Calu3 (cell line): ENCODE measurements at regions of chr2 and their contacts with region 1.

Region 1: DNA sequence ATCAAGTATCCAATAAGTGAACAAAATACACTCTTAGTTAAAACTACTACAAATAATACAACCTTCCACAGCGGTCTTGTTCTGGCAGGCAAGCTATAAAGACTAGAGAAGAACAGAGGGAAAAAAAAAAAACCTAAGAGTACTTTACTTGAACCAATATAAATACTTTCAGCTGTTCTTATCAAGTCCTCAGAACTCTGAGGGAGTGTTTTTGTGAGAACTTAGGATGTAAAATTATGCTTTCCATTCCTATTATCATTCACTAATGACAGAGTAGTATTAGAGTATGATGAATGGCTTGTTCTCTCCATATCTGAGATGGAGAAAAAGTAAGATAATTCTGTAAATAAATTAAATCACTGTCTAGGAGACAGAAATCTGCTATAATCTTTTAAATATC is 68.3 kb downstream of the ATL2 start:
- DNase-seq: no peak
- H3K4me3 Mint-ChIP-seq: no peak overlapping the region
- H3K27ac Mint-ChIP-seq: no peak overlapping the region
- H3K4me1 Mint-ChIP-seq: peaks cover 4% of the 10 kb centered on the region
- H3K27me3 Mint-ChIP-seq: no peaks in the 10 kb centered on the region
- CTCF ChIP-seq: no peak

Region 2: GRCh38 chr2:37610638-37611289 is 698.1 kb before region 1 on chr2:
- CTCF ChIA-PET with region 1: no interaction called
- intact Hi-C with region 1: no loop called
- DNase-seq: no peak
- H3K4me3 Mint-ChIP-seq: no peak overlapping the region
- H3K27ac Mint-ChIP-seq: no peak overlapping the region
- H3K4me1 Mint-ChIP-seq: no peaks in the 10 kb centered on the region
- H3K27me3 Mint-ChIP-seq: no peaks in the 10 kb centered on the region
- CTCF ChIP-seq: no peak

Region 3: DNA sequence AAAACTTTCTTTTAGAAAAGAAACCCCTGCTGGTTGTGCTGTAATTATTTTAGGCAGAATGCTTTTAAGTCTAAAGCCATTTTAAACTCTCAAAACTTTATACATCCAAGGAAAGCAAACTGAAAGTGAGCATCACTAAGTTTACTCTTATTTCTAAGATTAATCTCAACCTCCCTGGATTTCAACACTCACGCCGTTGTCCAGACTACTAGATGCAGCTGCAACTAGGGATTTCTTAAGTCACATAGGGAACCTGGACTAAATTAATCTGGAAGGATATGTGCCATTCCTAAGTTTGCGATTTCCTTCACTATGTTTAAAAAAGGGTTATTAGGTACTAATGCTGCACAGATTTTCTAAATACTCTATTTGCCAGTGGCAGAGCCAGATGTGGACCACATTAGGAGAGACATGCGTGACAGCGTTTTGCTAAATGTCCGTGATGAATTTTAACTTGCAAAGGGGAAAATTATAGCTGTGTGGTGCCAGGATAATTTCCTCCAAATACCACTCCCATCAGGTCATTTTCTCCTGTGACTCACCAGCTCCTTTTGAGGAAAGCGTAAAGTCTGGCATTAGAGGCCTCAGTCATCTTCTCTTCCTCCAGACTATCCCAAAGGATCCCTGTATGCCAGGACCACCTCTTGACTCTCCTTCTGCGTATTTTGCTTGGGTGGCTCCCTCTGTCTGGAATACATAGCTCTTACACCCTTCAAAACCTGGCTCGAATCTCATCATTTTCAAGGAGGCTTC is 75.4 kb before region 1 on chr2:
- CTCF ChIA-PET with region 1: no interaction called
- intact Hi-C with region 1: no loop called
- DNase-seq: no peak
- H3K4me3 Mint-ChIP-seq: no peak overlapping the region
- H3K27ac Mint-ChIP-seq: no peak overlapping the region
- H3K4me1 Mint-ChIP-seq: no peaks in the 10 kb centered on the region
- H3K27me3 Mint-ChIP-seq: no peaks in the 10 kb centered on the region
- CTCF ChIP-seq: no peak

Region 4: GRCh38 chr2:38446420-38446819 is 137.6 kb after region 1 on chr2:
- CTCF ChIA-PET with region 1: no interaction called
- intact Hi-C with region 1: no loop called
- DNase-seq: no peak
- H3K4me3 Mint-ChIP-seq: no peak overlapping the region
- H3K27ac Mint-ChIP-seq: no peak overlapping the region
- H3K4me1 Mint-ChIP-seq: peaks cover 36% of the 10 kb centered on the region
- H3K27me3 Mint-ChIP-seq: no peaks in the 10 kb centered on the region
- CTCF ChIP-seq: no peak

Region 5: GRCh38 chr2:38734299-38735058 is 425.7 kb after region 1 on chr2:
- CTCF ChIA-PET with region 1: no interaction called
- intact Hi-C with region 1: loop called (anchors 5 kb)
- DNase-seq: no peak
- H3K4me3 Mint-ChIP-seq: no peak overlapping the region
- H3K27ac Mint-ChIP-seq: no peak overlapping the region
- H3K4me1 Mint-ChIP-seq: no peaks in the 10 kb centered on the region
- H3K27me3 Mint-ChIP-seq: no peaks in the 10 kb centered on the region
- CTCF ChIP-seq: no peak